Activated CD4-positive, alpha-beta memory T cell treated with anti-CD3 and anti-CD28 coated beads, Interleukin-2, amount 10 ng/mL, durations not matched to agents 7 days and 5 days (primary cell): ENCODE measurements at regions of chr3 and their contacts with region 1.

Region 1: DNA sequence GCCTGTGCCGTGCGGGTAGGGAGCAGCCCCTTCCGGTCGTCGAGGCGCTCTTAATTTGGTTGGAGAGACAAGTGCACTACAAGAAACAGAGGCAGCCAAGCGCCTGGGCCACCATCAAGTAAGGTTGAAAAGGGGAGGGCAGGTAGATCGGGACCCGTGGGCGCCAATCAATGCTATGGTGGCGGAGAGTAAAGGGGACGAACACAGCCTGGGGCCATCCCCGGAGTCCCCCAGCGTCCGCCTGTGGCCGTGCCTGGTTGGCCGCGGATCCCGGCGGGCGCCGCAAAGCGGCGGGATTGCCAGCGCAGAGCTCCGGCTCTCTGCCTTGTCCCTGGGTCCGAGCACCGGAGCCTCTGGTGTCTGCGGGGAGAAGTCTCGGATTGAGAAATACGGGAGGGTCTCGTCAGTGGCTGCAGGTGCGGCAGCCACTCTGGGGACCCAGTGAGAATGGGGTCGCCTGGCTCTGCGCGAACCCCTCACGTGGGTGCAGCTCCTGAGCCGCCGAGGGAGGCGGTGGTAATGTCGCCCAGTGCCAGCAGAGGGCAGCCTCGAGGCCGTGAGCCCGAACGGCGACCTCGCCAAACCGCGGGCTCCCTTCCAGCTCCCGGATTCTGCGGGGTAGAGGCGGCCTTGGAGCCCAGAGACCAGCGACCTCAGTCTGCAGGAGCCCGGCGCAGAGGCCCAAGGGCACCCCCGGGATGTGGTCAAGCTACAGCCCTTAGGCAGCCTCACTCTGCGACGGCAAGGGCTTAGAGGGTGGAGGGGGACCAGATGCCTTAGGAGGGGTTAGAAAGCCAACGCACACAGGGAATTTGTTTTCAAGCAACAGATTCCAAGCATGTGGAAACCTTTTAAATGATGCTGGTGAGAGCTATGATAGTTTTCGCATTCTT is 10.8 kb downstream of the FOXL2 start:
- DNase-seq: peak; percentile 67
- H3K4me3 Mint-ChIP-seq: peak overlapping the region; percentile 46
- H3K27ac Mint-ChIP-seq: peak overlapping the region; percentile 35
- H3K4me1 Mint-ChIP-seq: peaks cover 26% of the 10 kb centered on the region
- H3K27me3 Mint-ChIP-seq: peaks cover 77% of the 10 kb centered on the region

Region 2: DNA sequence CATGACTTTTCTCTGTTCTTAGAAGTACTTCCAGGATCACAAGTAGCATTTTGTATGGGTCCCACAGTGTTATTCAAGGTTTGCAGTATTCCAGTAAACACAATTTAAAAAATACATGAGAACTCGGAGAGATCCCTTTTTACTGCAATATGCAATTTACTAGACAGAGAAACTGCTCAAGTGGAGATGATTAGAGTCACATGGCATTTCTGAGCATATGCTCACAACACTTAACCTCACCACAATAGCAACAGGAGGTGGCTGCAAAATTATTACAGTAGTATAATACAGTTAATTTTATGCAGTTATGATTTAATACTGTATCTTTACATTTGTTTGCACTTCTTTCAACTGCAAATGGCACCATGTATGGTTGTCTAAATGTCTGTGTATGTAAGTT is 188.9 kb before region 1 on chr3:
- CTCF ChIA-PET with region 1: no interaction called
- POLR2A ChIA-PET with region 1: no interaction called
- DNase-seq: no peak
- H3K4me3 Mint-ChIP-seq: no peak overlapping the region
- H3K27ac Mint-ChIP-seq: no peak overlapping the region
- H3K4me1 Mint-ChIP-seq: peaks cover 1% of the 10 kb centered on the region
- H3K27me3 Mint-ChIP-seq: no peaks in the 10 kb centered on the region

Region 3: DNA sequence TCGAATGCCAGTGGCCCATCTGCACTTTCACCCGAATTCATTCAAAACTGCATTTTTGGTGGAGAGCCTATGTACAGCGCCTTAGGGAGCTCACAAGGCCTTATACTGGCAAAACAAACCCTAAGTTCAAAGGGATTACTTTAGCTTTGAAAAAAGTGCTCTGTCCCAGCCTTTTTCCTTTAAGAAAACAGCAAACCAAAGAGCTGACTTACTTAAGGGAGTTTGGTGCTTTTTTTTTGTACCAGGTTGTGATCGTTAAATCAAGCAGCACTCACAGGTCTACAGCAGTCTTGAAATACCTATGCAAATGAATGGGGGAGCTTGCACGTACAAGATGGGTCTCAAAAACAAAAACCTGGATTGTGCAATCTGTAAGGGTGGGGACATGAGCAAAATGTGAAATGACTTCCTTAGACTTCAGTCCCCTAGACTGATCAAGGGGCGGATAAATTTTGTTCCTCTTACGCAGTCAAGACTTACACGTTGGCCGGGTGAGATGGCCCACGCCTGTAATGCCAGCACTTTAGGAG is 89.8 kb before region 1 on chr3:
- CTCF ChIA-PET with region 1: no interaction called
- POLR2A ChIA-PET with region 1: no interaction called
- DNase-seq: no peak
- H3K4me3 Mint-ChIP-seq: no peak overlapping the region
- H3K27ac Mint-ChIP-seq: no peak overlapping the region
- H3K4me1 Mint-ChIP-seq: no peaks in the 10 kb centered on the region
- H3K27me3 Mint-ChIP-seq: peaks cover 2% of the 10 kb centered on the region

Region 4: DNA sequence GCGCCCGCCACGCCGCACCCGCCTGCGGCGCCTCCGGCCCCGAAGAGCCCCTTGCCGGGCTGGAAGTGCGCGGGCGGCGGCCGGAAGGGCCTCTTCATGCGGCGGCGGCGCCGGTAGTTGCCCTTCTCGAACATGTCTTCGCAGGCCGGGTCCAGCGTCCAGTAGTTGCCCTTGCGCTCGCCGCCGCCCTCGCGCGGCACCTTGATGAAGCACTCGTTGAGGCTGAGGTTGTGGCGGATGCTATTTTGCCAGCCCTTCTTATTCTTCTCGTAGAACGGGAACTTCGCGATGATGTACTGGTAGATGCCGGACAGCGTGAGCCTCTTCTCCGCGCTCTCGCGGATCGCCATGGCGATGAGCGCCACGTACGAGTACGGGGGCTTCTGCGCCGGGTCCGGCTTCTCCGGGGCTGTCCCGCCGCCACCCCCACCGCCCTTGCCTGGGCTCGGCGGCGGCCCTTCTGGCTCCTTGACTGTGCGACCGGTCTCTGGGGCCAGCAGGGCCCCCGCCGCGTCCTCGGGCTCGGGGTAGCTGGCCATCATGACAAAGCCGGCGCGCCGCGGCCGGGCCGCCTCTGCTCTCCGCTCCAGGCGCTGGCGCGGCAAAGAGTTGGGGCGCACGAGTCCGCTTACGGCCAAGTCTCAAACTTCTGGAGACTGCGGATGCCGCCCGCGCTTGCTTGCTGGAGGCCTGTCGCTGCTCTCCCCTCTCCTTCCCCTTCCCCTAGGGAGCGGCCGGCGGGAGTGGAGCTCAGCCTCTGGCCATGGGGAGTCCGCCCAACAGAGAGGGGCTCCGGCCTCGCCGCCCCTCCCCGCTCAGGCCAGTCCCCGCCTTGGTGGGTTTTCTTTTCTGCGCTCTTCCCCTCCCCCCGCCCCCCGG is 10.3 kb after region 1 on chr3:
- CTCF ChIA-PET with region 1: interaction called, 13 read pairs
- POLR2A ChIA-PET with region 1: interaction called, 3 read pairs
- DNase-seq: no peak
- H3K4me3 Mint-ChIP-seq: peak overlapping the region; percentile 48
- H3K27ac Mint-ChIP-seq: no peak overlapping the region
- H3K4me1 Mint-ChIP-seq: peaks cover 35% of the 10 kb centered on the region
- H3K27me3 Mint-ChIP-seq: peaks cover 86% of the 10 kb centered on the region

Region 5: GRCh38 chr3:139006051-139006716 is 70.1 kb after region 1 on chr3 and contains the start of gene PRR23A:
- CTCF ChIA-PET with region 1: no interaction called
- POLR2A ChIA-PET with region 1: no interaction called
- DNase-seq: no peak
- H3K4me3 Mint-ChIP-seq: no peak within 1 kb of the TSS
- H3K27ac Mint-ChIP-seq: no peak within 1 kb of the TSS
- H3K4me1 Mint-ChIP-seq: no peaks in the 10 kb centered on the region
- H3K27me3 Mint-ChIP-seq: no peaks in the 10 kb centered on the region
- total RNA-seq, gene PRR23A: not detected